Activated CD8-positive, alpha-beta T cell treated with anti-CD3 and anti-CD28 coated beads for 36 hours (primary cell): ENCODE measurements at regions of chr1 and their contacts with region 1.

Region 1: DNA sequence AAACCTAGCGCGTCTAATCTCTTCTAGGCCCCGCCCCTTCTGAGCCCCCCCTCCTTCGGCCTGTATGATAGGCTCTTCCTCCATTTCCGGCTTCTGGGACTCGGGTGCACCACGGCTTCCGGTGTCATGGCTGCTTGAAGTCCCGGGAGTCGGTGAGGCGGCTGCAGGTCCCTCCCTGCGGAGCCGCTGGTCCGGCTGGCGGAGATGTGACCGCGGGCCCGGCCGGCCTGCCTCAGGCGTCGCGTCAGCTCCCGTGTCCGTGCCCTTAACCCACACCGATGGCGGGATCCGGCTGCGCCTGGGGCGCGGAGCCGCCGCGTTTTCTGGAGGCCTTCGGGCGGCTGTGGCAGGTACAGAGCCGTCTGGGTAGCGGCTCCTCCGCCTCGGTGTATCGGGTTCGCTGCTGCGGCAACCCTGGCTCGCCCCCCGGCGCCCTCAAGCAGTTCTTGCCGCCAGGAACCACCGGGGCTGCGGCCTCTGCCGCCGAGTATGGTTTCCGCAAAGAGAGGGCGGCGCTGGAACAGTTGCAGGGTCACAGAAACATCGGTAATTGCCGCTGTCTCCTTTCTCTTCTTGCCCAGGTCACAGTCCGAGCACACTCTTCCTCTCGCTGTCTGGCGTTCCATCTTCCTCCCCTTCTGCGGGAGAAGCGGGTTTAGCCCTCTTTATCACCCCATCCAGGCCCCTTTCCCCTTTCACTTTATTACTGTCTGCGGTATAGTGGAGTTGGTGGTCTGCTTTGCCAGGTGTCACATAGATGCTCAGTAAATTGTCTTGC is at the start of gene UHMK1:
- DNase-seq: peak; percentile 96
- ATAC-seq: peak; percentile 99
- H3K4me3 Mint-ChIP-seq: peak within 1 kb of the TSS; percentile 100
- H3K27ac Mint-ChIP-seq: peak within 1 kb of the TSS; percentile 95
- H3K4me1 Mint-ChIP-seq: peaks cover 39% of the 10 kb centered on the region
- H3K27me3 Mint-ChIP-seq: no peaks in the 10 kb centered on the region
- CTCF ChIP-seq: no peak
- total RNA-seq, gene UHMK1: 44.7 to 45.6 TPM

Region 2: DNA sequence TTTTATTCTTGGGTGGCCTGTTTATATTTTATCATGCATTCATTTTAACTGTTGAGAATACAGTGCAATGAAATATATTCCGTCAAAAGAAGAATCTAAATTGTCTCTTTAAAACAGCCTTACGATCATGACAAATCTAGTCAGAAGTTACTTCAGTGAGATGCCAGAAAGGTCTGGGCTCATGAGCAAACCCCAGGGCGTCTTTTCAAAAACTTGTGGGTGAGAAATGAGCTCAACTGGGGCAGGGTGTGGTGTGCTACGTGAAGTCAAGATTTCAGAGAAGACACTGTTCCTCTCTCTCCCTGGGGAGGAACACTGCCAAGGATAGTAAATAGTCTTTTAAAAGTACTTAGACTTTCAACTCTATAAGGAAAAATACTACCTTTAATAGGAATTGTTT is 50.3 kb after region 1 on chr1:
- CTCF ChIA-PET with region 1: no interaction called
- POLR2A ChIA-PET with region 1: no interaction called
- intact Hi-C with region 1: no loop called
- DNase-seq: no peak
- ATAC-seq: peak; percentile 42
- H3K4me3 Mint-ChIP-seq: no peak overlapping the region
- H3K27ac Mint-ChIP-seq: no peak overlapping the region
- H3K4me1 Mint-ChIP-seq: no peaks in the 10 kb centered on the region
- H3K27me3 Mint-ChIP-seq: no peaks in the 10 kb centered on the region
- CTCF ChIP-seq: no peak

Region 3: DNA sequence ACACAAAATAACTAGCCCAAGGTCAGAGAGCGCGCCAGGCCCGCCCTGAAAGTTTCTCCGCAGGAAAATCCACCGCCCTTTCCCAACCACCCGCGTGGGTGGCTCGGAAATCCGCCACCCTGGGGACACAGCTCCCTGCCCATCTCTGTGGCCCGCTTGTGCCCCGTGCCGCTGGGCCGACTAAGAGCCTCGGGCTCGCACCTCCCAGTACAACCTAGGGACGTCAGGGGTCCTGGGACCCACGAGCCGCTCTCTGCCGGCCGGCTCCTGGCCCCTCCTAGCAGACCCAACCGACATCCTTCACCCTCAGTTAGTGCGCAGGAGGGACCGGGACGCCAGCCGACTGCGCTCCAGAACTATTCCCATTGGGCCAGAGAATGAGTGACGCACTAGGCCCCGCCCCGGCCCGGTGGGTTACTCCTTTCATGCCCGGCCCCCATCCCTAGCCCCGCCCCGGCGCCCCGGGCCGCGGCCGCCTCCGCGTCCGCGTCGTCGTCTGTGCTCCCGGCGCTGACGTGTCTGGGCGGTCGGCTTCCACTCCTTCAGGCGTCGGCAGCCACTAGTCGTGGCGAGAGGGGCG is 63.2 kb after region 1 on chr1:
- CTCF ChIA-PET with region 1: interaction called, 3 read pairs
- POLR2A ChIA-PET with region 1: no interaction called
- intact Hi-C with region 1: loop called (anchors 5 kb)
- DNase-seq: peak; percentile 99
- ATAC-seq: peak; percentile 96
- H3K4me3 Mint-ChIP-seq: peak overlapping the region; percentile 91
- H3K27ac Mint-ChIP-seq: peak overlapping the region; percentile 95
- H3K4me1 Mint-ChIP-seq: peaks cover 42% of the 10 kb centered on the region
- H3K27me3 Mint-ChIP-seq: no peaks in the 10 kb centered on the region
- CTCF ChIP-seq: no peak

Region 4: GRCh38 chr1:162605225-162605927 is 107.5 kb after region 1 on chr1:
- CTCF ChIA-PET with region 1: no interaction called
- POLR2A ChIA-PET with region 1: no interaction called
- intact Hi-C with region 1: no loop called
- DNase-seq: no peak
- ATAC-seq: no peak
- H3K4me3 Mint-ChIP-seq: no peak overlapping the region
- H3K27ac Mint-ChIP-seq: no peak overlapping the region
- H3K4me1 Mint-ChIP-seq: no peaks in the 10 kb centered on the region
- H3K27me3 Mint-ChIP-seq: no peaks in the 10 kb centered on the region
- CTCF ChIP-seq: no peak